Left colon (tissue), 2 donors: ENCODE measurements at regions of chr5 and their contacts with region 1.

Region 1: GRCh38 chr5:146273109-146273508 is 65.5 kb upstream of the POU4F3 start:
- DNase-seq: no peak
- ATAC-seq: no peak

Region 2: DNA sequence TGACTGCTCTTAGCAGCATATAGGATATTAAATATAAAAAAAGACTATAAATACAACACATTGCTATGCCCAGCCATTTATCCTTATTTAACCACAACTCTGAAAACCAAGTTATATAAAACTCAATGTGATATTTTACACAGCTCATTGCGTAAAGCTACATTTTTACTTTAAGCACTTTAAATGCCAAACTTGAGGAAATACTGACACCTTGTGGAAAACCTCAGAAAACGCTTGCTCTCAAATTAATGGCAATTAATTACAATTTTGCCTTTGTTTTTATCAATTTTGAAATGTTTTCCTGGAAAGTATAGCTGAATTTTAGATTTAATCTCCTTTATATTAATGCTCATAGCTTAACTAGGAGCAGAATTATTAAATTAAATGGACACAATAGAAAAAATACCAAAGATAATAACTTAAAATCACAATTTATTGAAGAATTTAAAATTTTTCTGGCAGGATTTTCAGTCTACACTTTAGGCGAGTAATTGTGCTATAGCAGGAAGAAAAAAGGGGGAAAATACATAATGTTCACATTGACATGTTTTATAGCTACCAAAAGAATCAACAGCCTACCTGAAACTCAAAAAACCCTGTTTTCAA is 142.6 kb before region 1 on chr5:
- intact Hi-C with region 1: loop called in 1 of 2 experiments (anchors 10 kb)
- DNase-seq: no peak
- ATAC-seq: no peak

Region 3: GRCh38 chr5:146461319-146461718 is 188.2 kb after region 1 on chr5:
- intact Hi-C with region 1: no loop called
- DNase-seq: no peak
- ATAC-seq: no peak